CD4-positive, alpha-beta T cell (primary cell): ENCODE measurements at regions of chr14 and their contacts with region 1.

Region 1: GRCh38 chr14:50321009-50321660 is 9.0 kb downstream of the DMAC2L start:
- DNase-seq: peak; percentile 29 to 93 (median 54)
- ATAC-seq: peak; percentile 96
- H3K4me3 ChIP-seq: peak overlapping the region; percentile 9
- H3K4me3 Mint-ChIP-seq: no peak overlapping the region
- H3K27ac ChIP-seq: peak overlapping the region in 1 of 2 donors; percentile 16
- H3K27ac Mint-ChIP-seq: no peak overlapping the region
- H3K4me1 ChIP-seq: peaks cover 8% of the 10 kb centered on the region
- H3K4me1 Mint-ChIP-seq: peaks cover 27% of the 10 kb centered on the region
- H3K27me3 ChIP-seq: no peaks in the 10 kb centered on the region
- H3K27me3 Mint-ChIP-seq: no peaks in the 10 kb centered on the region
- CTCF ChIP-seq: peak; percentile 87

Region 2: DNA sequence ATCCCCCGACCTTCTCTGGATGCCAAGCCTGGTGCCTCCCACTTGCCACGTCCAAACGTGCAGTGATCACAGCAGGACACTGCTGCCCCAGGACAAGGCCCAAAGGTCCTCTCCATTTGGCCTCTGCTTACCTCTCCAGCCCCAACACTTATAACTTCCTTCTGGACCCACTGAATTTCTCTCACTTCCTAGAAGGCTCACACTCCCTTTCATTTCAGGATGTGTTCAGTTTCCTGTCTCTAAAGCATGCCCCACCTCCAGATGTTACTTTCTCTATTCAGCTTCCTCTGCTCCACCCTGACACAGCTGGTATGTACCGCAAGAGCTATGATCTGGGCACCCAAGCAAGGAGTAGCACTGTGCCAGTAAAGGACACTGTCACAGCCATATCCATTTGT is 42.6 kb after region 1 on chr14:
- CTCF ChIA-PET with region 1: interaction called, 4 read pairs
- POLR2A ChIA-PET with region 1: interaction called, 7 read pairs
- intact Hi-C with region 1: loop called in 1 of 2 experiments (anchors 2 kb)
- DNase-seq: peak in 12 of 14 experiments; percentile 12 to 91 (median 44)
- ATAC-seq: peak; percentile 96
- H3K4me3 ChIP-seq: peak overlapping the region; percentile 66
- H3K4me3 Mint-ChIP-seq: peak overlapping the region; percentile 88
- H3K27ac ChIP-seq: peak overlapping the region; percentile 67 to 91
- H3K27ac Mint-ChIP-seq: peak overlapping the region; percentile 86
- H3K4me1 ChIP-seq: peaks cover 25% of the 10 kb centered on the region
- H3K4me1 Mint-ChIP-seq: peaks cover 45% of the 10 kb centered on the region
- H3K27me3 ChIP-seq: no peaks in the 10 kb centered on the region
- H3K27me3 Mint-ChIP-seq: no peaks in the 10 kb centered on the region
- CTCF ChIP-seq: no peak

Region 3: GRCh38 chr14:50447461-50447860 is 126.3 kb after region 1 on chr14:
- CTCF ChIA-PET with region 1: interaction called, 3 read pairs
- POLR2A ChIA-PET with region 1: no interaction called
- intact Hi-C with region 1: loop called in 1 of 2 experiments (anchors 10 kb)
- DNase-seq: no peak
- ATAC-seq: no peak
- H3K4me3 ChIP-seq: no peak overlapping the region
- H3K4me3 Mint-ChIP-seq: no peak overlapping the region
- H3K27ac ChIP-seq: no peak overlapping the region
- H3K27ac Mint-ChIP-seq: no peak overlapping the region
- H3K4me1 ChIP-seq: no peaks in the 10 kb centered on the region
- H3K4me1 Mint-ChIP-seq: no peaks in the 10 kb centered on the region
- H3K27me3 ChIP-seq: no peaks in the 10 kb centered on the region
- H3K27me3 Mint-ChIP-seq: no peaks in the 10 kb centered on the region
- CTCF ChIP-seq: no peak